ENCODE measurements at regions of chr5 and their contacts with region 1.

Region 1: GRCh38 chr5:151051066-151051930 is 29.5 kb downstream of the TNIP1 start:
- DNase-seq: peak; percentile 91
- H3K4me3 ChIP-seq: no peak overlapping the region
- H3K27ac ChIP-seq: peak overlapping the region in 7 of 8 donors; percentile 12 to 95 (median 69)
- H3K4me1 ChIP-seq: peaks cover 5 to 76% (median 39%) of the 10 kb centered on the region in 6 donors
- H3K27me3 ChIP-seq: no peaks in the 10 kb centered on the region
- CTCF ChIP-seq: peak; percentile 58 to 95 (median 86)
- POLR2A ChIP-seq: no peak

Region 2: GRCh38 chr5:151115274-151115905 is 64.1 kb after region 1 on chr5:
- intact Hi-C with region 1: loop called (anchors 5 kb)
- DNase-seq: peak; percentile 93
- H3K4me3 ChIP-seq: no peak overlapping the region
- H3K27ac ChIP-seq: peak overlapping the region in 5 of 8 donors; percentile 8 to 44 (median 32)
- H3K4me1 ChIP-seq: peaks cover 12 to 41% (median 19%) of the 10 kb centered on the region in 6 donors
- H3K27me3 ChIP-seq: no peaks in the 10 kb centered on the region
- CTCF ChIP-seq: peak; percentile 89 to 96 (median 94)
- POLR2A ChIP-seq: no peak